Activated naive CD4-positive, alpha-beta T cell treated with anti-CD3 and anti-CD28 coated beads for 36 hours (primary cell): ENCODE measurements at regions of chr3 and their contacts with region 1.

Region 1: GRCh38 chr3:39288300-39288808 is 8.5 kb upstream of the CX3CR1 start:
- DNase-seq: peak; percentile 91
- H3K4me3 Mint-ChIP-seq: no peak overlapping the region
- H3K27ac Mint-ChIP-seq: no peak overlapping the region
- H3K4me1 Mint-ChIP-seq: peaks cover 12% of the 10 kb centered on the region
- H3K27me3 Mint-ChIP-seq: no peaks in the 10 kb centered on the region

Region 2: DNA sequence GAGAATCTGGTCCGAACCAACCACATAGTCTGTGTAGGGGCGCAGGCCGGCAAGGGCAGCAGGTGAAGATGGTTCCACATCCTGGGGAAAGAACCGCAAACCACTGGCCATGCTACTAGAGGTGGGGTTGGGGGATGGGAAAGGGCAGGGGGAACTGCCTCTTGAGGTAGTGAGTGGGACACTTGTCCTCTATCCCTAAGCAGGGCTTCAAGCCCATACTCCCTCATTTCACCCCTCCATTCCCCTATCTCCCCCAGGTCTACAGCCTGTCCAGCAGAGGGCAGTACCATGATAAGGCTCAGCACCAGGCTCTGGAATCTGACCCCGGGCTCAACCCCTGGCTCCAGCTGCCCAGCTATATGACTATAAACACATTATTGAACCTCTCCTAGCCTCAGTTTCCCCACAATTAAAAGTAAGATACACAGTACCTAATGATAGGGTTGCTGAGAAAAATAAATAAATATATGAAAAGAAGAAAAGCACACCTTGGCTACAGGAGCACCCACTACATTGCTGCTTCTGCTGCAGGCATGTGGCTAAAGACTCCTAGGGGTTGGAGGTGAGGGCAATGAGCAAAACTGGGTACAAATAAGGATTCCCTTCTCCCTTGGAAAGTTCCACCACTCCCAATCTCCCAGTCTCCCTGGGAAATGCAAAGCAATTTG is 187.2 kb before region 1 on chr3:
- CTCF ChIA-PET with region 1: interaction called, 111 read pairs
- intact Hi-C with region 1: loop called (anchors 1 kb)
- DNase-seq: peak; percentile 63
- H3K4me3 Mint-ChIP-seq: no peak overlapping the region
- H3K27ac Mint-ChIP-seq: no peak overlapping the region
- H3K4me1 Mint-ChIP-seq: peaks cover 28% of the 10 kb centered on the region
- H3K27me3 Mint-ChIP-seq: no peaks in the 10 kb centered on the region

Region 3: GRCh38 chr3:39189959-39190269 is 98.4 kb before region 1 on chr3:
- CTCF ChIA-PET with region 1: interaction called, 359 read pairs
- intact Hi-C with region 1: loop called (anchors 1 kb)
- DNase-seq: peak; percentile 75
- H3K4me3 Mint-ChIP-seq: no peak overlapping the region
- H3K27ac Mint-ChIP-seq: no peak overlapping the region
- H3K4me1 Mint-ChIP-seq: peaks cover 27% of the 10 kb centered on the region
- H3K27me3 Mint-ChIP-seq: no peaks in the 10 kb centered on the region

Region 4: GRCh38 chr3:39216176-39216790 is 72.1 kb before region 1 on chr3:
- CTCF ChIA-PET with region 1: interaction called, 21 read pairs
- intact Hi-C with region 1: no loop called
- DNase-seq: no peak
- H3K4me3 Mint-ChIP-seq: no peak overlapping the region
- H3K27ac Mint-ChIP-seq: no peak overlapping the region
- H3K4me1 Mint-ChIP-seq: no peaks in the 10 kb centered on the region
- H3K27me3 Mint-ChIP-seq: peaks cover 12% of the 10 kb centered on the region

Region 5: GRCh38 chr3:39302178-39302577 is 13.8 kb after region 1 on chr3:
- CTCF ChIA-PET with region 1: interaction called, 20 read pairs
- intact Hi-C with region 1: no loop called
- DNase-seq: no peak
- H3K4me3 Mint-ChIP-seq: no peak overlapping the region
- H3K27ac Mint-ChIP-seq: no peak overlapping the region
- H3K4me1 Mint-ChIP-seq: no peaks in the 10 kb centered on the region
- H3K27me3 Mint-ChIP-seq: peaks cover 2% of the 10 kb centered on the region

Region 6: GRCh38 chr3:39372833-39373232 is 84.5 kb after region 1 on chr3:
- CTCF ChIA-PET with region 1: interaction called, 81 read pairs
- intact Hi-C with region 1: loop called (anchors 1 kb)
- DNase-seq: no peak
- H3K4me3 Mint-ChIP-seq: no peak overlapping the region
- H3K27ac Mint-ChIP-seq: no peak overlapping the region
- H3K4me1 Mint-ChIP-seq: no peaks in the 10 kb centered on the region
- H3K27me3 Mint-ChIP-seq: no peaks in the 10 kb centered on the region

Region 7: DNA sequence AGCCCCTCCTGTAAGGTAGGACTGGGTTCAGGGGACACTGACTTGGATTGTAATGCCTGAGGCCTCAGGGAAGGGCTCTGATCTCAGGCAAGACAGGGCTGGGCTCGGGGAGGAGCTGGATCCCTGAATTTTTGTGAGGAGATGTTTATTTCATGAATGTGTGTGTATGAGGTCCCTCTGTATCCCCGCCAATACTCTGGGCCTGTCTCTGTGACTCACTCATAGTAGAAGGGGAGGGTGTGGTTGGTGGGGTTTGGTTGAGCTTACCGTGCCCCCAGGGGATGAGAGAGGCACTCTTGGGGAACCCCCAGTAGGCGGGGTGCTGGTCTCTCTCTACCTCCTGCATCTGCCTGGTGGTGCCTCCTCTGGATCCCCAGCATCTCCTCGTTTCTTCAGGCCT is 146.2 kb after region 1 on chr3:
- CTCF ChIA-PET with region 1: no interaction called
- intact Hi-C with region 1: no loop called
- DNase-seq: no peak
- H3K4me3 Mint-ChIP-seq: no peak overlapping the region
- H3K27ac Mint-ChIP-seq: no peak overlapping the region
- H3K4me1 Mint-ChIP-seq: no peaks in the 10 kb centered on the region
- H3K27me3 Mint-ChIP-seq: peaks cover 9% of the 10 kb centered on the region